Activated CD4-positive, alpha-beta T cell treated with anti-CD3 and anti-CD28 coated beads, Interleukin-2, amount 10 ng/mL, durations not matched to agents 24 days and 14 days (primary cell): ENCODE measurements at regions of chr7 and their contacts with region 1.

Region 1: DNA sequence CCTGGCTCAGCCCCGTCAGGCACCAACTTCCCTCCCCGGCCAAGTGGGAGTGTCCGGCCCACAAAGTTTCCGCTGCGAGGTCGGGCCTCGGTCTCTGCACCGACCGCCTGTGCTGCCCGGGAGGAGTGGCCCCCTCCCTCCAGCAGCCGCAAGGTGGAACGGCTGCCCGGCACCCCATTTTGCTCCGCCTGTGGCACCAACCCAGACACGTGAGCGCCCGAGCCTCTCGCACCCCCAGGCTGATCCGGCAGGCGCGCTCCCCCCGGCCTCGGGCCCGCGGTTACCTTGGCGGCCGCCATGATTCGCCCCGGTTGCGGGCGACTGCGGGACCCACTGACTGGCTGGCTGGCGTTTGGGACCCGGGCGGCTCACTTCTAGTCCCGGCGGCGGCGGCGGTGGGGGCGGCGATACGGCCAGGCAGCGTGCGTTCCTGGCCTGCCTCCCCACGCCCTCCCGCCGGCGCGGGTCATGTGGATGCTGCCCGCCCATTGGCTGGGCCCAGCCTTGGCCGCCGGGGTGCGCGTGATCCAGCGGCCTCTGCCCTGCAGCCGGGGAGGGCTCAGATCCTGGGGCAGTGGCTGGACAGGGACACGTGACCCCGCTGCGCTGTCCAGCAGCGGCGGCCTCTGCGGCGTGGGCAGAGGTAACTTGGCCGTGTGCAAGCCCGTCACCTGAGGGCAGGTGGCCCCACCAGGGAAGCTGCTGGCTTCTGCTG is at the start of gene SLC25A13:
- DNase-seq: peak; percentile 90
- H3K4me3 Mint-ChIP-seq: peak within 1 kb of the TSS; percentile 94
- H3K27ac Mint-ChIP-seq: peak within 1 kb of the TSS; percentile 98
- H3K4me1 Mint-ChIP-seq: peaks cover 42% of the 10 kb centered on the region
- H3K27me3 Mint-ChIP-seq: peaks cover 3% of the 10 kb centered on the region
- total RNA-seq, gene SLC25A13: 25.8 and 26.3 TPM in 2 replicates

Region 2: GRCh38 chr7:95059842-95060313 is 1261.9 kb before region 1 on chr7:
- intact Hi-C with region 1: no loop called
- DNase-seq: no peak
- H3K4me3 Mint-ChIP-seq: no peak overlapping the region
- H3K27ac Mint-ChIP-seq: no peak overlapping the region
- H3K4me1 Mint-ChIP-seq: no peaks in the 10 kb centered on the region
- H3K27me3 Mint-ChIP-seq: no peaks in the 10 kb centered on the region

Region 3: DNA sequence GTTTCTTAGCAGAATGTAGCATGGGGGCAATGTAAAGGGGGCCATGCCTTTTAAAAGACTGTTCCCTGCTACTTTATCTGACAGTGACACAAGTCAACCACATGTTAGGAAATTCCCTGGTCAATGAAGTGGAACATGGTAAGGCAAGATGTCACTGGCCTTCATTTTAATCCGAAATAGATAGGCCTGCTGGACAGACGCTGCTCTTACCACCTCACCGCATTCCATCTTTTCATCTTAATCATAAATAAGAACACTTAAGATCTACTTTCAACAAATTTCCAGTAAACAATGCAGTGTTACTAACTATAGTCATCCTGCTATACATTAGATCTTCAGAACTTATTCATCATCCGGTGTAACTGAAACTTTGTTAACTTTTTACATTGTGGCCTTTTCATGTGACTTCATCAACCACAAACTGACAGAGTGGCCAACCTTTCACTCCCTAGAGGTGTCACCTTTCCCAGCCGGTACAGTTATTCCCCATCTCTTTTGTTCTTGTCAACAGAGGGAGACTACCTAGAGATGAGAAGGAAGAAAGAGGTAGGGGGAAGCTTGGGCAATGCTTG is 820.5 kb before region 1 on chr7:
- intact Hi-C with region 1: loop called (anchors 5 kb)
- DNase-seq: peak; percentile 78
- H3K4me3 Mint-ChIP-seq: peak overlapping the region; percentile 10
- H3K27ac Mint-ChIP-seq: peak overlapping the region; percentile 84
- H3K4me1 Mint-ChIP-seq: peaks cover 27% of the 10 kb centered on the region
- H3K27me3 Mint-ChIP-seq: no peaks in the 10 kb centered on the region

Region 4: DNA sequence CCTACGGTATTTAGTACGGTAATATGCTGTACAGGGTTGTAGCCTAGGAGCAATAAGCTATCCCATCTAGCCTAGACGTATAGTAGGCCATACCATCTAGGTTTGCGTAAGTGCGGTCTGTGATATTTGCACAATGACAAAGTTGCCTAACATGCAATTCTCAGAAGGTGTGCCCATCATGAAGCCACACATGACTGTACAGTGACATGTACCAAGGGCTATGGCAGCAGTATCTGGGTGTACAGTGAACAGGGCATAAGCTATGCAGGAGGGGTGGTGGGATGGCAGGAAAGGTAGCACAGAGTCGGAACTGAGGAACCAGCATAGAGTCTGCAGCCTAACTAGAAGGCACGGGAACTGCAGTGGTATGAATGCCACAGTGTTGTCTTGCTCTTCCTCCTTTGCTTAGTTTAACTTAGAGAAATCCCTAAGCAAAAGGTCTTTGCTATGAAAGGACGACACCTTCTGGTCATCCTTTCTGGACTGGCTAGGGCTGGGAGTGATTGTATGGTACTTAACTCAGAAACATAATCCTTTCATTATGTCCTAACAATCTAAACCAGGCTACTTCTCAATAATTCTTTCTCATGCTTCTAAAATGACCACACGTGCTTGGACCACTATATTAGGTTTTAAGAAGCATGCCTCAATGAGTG is 456.0 kb before region 1 on chr7:
- intact Hi-C with region 1: no loop called
- DNase-seq: no peak
- H3K4me3 Mint-ChIP-seq: no peak overlapping the region
- H3K27ac Mint-ChIP-seq: no peak overlapping the region
- H3K4me1 Mint-ChIP-seq: no peaks in the 10 kb centered on the region
- H3K27me3 Mint-ChIP-seq: no peaks in the 10 kb centered on the region

Region 5: DNA sequence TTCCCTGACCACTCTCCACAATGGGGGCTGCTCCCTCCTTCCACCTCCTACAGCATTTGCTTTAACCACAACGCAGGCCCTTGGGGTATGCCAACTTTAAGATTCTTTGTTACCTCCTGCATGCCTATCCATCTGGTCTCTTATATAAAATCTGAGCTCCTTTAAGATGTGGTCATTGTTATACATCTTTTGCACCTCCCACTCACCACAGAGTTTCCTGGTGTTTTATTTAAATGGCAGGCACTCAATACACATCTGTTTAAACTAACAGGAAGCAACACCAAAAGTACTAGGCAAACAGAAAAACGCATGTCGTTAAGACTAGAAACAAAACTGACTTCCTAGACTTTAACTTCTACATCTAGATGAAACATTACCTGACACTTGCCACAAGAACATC is 36.2 kb before region 1 on chr7:
- intact Hi-C with region 1: loop called (anchors 1 kb)
- DNase-seq: peak; percentile 87
- H3K4me3 Mint-ChIP-seq: peak overlapping the region; percentile 68
- H3K27ac Mint-ChIP-seq: peak overlapping the region; percentile 93
- H3K4me1 Mint-ChIP-seq: peaks cover 49% of the 10 kb centered on the region
- H3K27me3 Mint-ChIP-seq: no peaks in the 10 kb centered on the region

Region 6: DNA sequence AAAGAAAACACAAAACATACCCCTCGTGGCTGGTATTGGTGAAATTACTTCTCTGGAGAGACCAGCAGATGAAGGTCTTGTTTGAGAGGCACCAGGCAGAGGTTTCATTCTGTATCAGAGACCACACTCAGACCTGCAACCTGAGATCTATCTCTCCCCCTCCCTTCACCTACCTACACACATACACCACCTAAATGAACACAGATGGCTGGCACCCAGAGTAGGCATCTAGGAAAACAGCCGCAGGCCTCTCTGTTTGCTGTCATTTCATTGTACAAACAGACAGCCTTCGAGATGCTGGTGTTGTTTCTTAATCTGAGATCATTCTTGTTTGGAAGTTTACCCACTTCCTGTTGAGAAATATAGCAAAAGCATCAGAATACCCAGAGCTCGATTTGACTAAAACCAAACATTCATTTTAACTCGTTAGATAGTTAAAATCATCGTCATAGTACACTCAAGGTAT is 174.0 kb after region 1 on chr7:
- intact Hi-C with region 1: loop called (anchors 2 kb)
- DNase-seq: peak; percentile 74
- H3K4me3 Mint-ChIP-seq: peak overlapping the region; percentile 57
- H3K27ac Mint-ChIP-seq: peak overlapping the region; percentile 89
- H3K4me1 Mint-ChIP-seq: peaks cover 18% of the 10 kb centered on the region
- H3K27me3 Mint-ChIP-seq: peaks cover 9% of the 10 kb centered on the region

Region 7: GRCh38 chr7:96837593-96837992 is 515.8 kb after region 1 on chr7:
- intact Hi-C with region 1: loop called (anchors 1 kb)
- DNase-seq: peak; percentile 83
- H3K4me3 Mint-ChIP-seq: peak overlapping the region; percentile 50
- H3K27ac Mint-ChIP-seq: no peak overlapping the region
- H3K4me1 Mint-ChIP-seq: peaks cover 17% of the 10 kb centered on the region
- H3K27me3 Mint-ChIP-seq: peaks cover 50% of the 10 kb centered on the region

Region 8: GRCh38 chr7:97971990-97972943 is 1650.5 kb after region 1 on chr7:
- intact Hi-C with region 1: loop called (anchors 5 kb)
- DNase-seq: peak; percentile 95
- H3K4me3 Mint-ChIP-seq: peak overlapping the region; percentile 96
- H3K27ac Mint-ChIP-seq: peak overlapping the region; percentile 95
- H3K4me1 Mint-ChIP-seq: peaks cover 12% of the 10 kb centered on the region
- H3K27me3 Mint-ChIP-seq: peaks cover 2% of the 10 kb centered on the region